ENCODE measurements at regions of chr3 and their contacts with region 1.

Region 1: DNA sequence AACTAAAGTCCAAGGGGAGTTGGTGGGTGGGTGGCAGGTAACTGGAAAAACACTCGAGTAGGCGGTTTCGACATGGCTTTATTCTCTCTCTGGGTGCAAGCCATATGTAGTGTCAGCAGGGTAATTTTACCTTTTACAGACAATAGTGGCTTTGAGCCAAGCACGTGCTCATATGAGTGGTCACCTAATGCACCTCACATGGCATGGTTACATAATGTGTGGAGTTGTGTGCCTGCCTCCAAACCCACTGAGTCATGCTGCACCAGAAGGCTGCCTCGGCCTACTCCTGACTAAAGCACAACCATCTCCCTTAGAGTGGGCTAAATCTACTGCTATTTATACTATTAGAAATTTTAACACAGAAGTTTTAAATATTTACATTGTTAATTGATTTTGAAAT is 16.5 kb downstream of the CCRL2 start:
- DNase-seq: no peak
- ATAC-seq: no peak
- H3K4me3 ChIP-seq: no peak overlapping the region
- H3K27ac ChIP-seq: no peak overlapping the region
- H3K4me1 ChIP-seq: peaks cover 0 to 9% of the 10 kb centered on the region in 2 donors
- H3K27me3 ChIP-seq: no peaks in the 10 kb centered on the region
- CTCF ChIP-seq: no peak

Region 2: GRCh38 chr3:46276502-46277099 is 147.0 kb before region 1 on chr3:
- intact Hi-C with region 1: loop called in 1 of 2 experiments (anchors 10 kb)
- DNase-seq: peak in 2 of 4 donors; percentile 78 to 90
- ATAC-seq: peak; percentile 96
- H3K4me3 ChIP-seq: no peak overlapping the region
- H3K27ac ChIP-seq: no peak overlapping the region
- H3K4me1 ChIP-seq: peaks cover 0 to 17% of the 10 kb centered on the region in 2 donors
- H3K27me3 ChIP-seq: no peaks in the 10 kb centered on the region
- CTCF ChIP-seq: peak; percentile 42 to 87

Measured in left lung (tissue), 14 donors.